ENCODE measurements at regions of chr4 and their contacts with region 1.

Region 1: GRCh38 chr4:153466081-153466948 is at the start of gene TMEM131L:
- DNase-seq: peak; percentile 80 to 85
- ATAC-seq: peak; percentile 79 to 84 (median 82)
- H3K4me3 ChIP-seq: peak within 1 kb of the TSS; percentile 96
- H3K27ac ChIP-seq: peak within 1 kb of the TSS; percentile 98
- H3K4me1 ChIP-seq: peaks cover 59% of the 10 kb centered on the region
- H3K27me3 ChIP-seq: no peaks in the 10 kb centered on the region
- CTCF ChIP-seq: no peak
- total RNA-seq, gene TMEM131L: 6.9 to 21.2 (median 11.5) TPM

Region 2: DNA sequence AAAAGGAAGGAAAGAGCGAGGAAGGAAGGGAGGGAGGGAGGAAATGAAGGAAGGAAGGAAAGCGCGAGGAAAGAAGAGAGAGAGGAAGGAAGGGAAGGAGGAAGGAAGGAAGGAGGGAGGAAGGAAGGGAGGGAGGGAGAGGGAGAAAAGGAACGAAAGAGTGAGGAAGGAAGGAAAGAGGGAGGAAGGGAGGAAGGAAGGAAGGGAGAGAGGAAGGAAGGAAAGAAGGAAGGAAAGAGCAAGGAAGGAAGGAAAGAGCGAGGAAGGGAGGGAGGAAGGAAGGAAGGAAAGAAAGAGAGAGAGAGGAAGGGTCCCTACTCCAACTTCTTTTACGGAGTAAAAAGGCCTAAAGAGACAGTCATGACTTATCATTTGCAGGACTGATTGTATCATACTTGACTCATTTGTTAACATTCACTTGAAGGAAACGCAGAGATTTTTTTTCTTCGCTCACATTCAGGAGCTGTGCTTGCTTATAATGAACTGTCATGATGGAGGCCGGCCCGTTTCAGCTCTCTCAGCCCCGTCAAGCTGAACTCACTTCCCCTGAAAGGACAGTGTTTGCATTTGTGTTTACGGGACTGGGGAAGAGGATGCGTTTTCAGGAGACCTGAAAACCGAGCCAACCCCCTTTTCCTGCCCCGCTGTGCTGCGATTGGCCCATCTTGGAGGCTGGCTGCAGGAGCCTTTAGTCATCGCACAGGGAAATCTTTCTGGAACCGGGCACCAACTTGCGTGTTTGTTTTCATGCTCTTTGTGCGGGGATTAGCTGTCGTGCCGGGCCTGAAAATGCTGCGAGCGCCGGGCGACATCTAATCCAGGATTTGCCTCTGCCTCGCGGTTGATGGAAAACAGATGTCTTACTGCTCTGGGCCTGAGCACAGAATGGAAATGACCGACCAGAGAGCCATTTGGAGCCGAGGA is 244.3 kb before region 1 on chr4:
- intact Hi-C with region 1: no loop called
- DNase-seq: peak; percentile 57 to 74
- ATAC-seq: peak; percentile 55 to 83 (median 72)
- H3K4me3 ChIP-seq: peak overlapping the region; percentile 97
- H3K27ac ChIP-seq: peak overlapping the region; percentile 93
- H3K4me1 ChIP-seq: peaks cover 21% of the 10 kb centered on the region
- H3K27me3 ChIP-seq: no peaks in the 10 kb centered on the region
- CTCF ChIP-seq: no peak

Region 3: GRCh38 chr4:153535772-153536513 is 69.6 kb after region 1 on chr4:
- intact Hi-C with region 1: loop called in 1 of 2 experiments (anchors 5 kb)
- DNase-seq: no peak
- ATAC-seq: no peak
- H3K4me3 ChIP-seq: no peak overlapping the region
- H3K27ac ChIP-seq: no peak overlapping the region
- H3K4me1 ChIP-seq: peaks cover 86% of the 10 kb centered on the region
- H3K27me3 ChIP-seq: no peaks in the 10 kb centered on the region
- CTCF ChIP-seq: no peak

Region 4: DNA sequence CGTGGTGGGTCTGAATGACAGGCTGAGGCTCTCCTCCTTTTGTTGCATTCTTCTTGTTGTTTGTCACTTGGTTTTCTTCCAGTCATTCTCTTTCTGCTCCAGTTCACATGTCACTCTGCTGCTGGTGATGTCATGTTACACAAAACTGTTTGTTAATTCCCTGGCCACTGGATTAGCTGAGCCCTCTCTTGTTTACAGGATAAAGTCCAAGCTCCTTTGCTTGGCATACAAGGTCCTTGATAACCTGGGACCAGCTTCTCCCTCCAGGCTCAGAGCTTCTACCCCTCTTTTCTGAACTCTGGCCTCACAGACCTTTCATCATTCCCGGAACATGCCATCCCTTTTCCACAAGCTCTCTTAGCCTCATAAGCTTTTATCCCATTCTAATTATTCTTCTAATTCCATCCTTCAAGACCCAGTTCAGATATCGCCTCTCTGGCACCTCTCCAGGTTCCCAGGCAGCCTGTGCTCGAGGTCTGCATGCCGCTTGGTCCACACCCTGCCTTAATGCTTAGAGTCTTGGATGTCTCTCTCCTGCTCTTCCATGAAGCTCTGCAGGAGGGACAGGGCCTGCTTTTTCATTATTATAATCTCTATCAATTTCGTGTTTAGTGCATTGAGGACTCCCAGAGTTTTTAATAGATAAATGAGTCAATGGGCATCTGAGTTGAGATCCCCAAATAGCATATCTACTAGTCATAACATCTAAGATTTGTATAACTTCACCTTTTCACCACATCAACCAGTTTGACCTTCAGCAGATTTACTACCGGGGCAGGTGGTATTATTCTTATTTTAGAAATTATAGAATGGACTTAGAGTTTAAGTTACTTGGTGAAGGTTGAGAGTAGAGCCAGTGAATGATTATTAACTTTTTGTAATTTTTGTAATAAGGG is 98.6 kb after region 1 on chr4:
- intact Hi-C with region 1: loop called (anchors 2 to 5 kb)
- DNase-seq: peak in 1 of 2 donors; percentile 52
- ATAC-seq: peak; percentile 74 to 81 (median 75)
- H3K4me3 ChIP-seq: no peak overlapping the region
- H3K27ac ChIP-seq: peak overlapping the region; percentile 92
- H3K4me1 ChIP-seq: peaks cover 50% of the 10 kb centered on the region
- H3K27me3 ChIP-seq: no peaks in the 10 kb centered on the region
- CTCF ChIP-seq: no peak

Region 5: DNA sequence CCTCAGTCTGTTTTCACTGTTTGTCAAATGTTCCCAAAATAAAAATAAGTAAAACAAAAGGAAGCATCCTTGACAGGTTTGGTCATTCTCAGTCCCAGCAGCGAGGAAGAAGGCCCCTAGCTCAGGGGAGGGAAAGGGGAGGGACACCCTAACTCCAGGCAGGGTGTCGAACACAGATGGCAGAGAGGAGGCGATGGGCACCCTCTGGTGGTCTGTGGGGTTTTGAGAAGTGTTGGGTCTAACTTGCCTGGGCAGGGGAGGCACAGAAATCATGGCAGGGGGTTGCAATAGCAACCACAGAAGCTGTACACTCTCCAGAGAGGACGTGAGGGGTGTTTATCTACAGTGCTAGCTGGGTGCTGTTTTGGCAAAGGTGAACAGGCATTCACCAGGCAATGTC is 552.3 kb after region 1 on chr4:
- intact Hi-C with region 1: loop called in 1 of 2 experiments (anchors 5 kb)
- DNase-seq: no peak
- ATAC-seq: no peak
- H3K4me3 ChIP-seq: no peak overlapping the region
- H3K27ac ChIP-seq: no peak overlapping the region
- H3K4me1 ChIP-seq: no peaks in the 10 kb centered on the region
- H3K27me3 ChIP-seq: no peaks in the 10 kb centered on the region
- CTCF ChIP-seq: no peak